Activated CD8-positive, alpha-beta memory T cell treated with anti-CD3 and anti-CD28 coated beads, Interleukin-2, amount 10 ng/mL, durations not matched to agents 7 days and 5 days (primary cell): ENCODE measurements at regions of chr1 and their contacts with region 1.

Region 1: DNA sequence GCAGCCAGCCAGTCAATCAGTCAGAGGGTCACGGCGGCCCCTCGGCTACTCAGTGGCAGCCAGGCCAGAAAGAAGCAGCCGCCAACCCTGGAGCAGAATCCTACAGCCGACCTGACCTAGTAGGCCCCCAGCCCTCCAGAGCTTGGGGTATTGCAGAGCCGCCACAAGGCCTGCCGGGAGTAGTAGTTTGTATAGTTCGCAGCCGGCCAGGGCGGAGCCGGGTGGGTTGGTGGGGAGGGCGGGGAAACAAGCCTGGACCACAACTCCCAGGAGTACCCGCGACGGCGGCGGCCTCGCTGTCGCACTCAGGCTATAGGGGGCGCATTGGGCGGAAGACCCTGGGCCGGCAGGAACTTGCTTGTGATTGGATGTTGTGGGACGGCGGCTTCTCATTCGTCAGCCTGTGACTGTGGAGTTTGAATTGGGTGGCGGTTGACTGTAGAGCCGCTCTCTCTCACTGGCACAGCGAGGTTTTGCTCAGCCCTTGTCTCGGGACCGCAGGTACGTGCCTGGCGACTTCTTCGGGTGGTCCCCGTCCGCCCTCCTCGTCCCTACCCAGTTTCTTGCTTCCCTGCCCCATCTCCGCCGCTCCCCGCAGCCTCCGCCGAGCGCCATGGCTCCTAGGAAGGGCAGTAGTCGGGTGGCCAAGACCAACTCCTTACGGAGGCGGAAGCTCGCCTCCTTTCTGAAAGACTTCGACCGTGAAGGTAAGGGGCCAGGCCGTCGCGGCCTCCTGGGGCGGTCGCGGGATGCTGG is at the start of gene CDCA8:
- DNase-seq: peak; percentile 99
- ATAC-seq: peak; percentile 88
- H3K4me3 Mint-ChIP-seq: peak within 1 kb of the TSS; percentile 94
- H3K27ac Mint-ChIP-seq: peak within 1 kb of the TSS; percentile 94
- H3K4me1 Mint-ChIP-seq: peaks cover 59% of the 10 kb centered on the region
- H3K27me3 Mint-ChIP-seq: no peaks in the 10 kb centered on the region
- total RNA-seq, gene CDCA8: 77.2 to 97.3 TPM

Region 2: GRCh38 chr1:37595440-37596319 is 96.6 kb before region 1 on chr1 and contains the start of gene GNL2:
- CTCF ChIA-PET with region 1: interaction called, 11 read pairs
- DNase-seq: peak; percentile 97
- ATAC-seq: peak; percentile 98
- H3K4me3 Mint-ChIP-seq: peak within 1 kb of the TSS; percentile 100
- H3K27ac Mint-ChIP-seq: peak within 1 kb of the TSS; percentile 97
- H3K4me1 Mint-ChIP-seq: peaks cover 39% of the 10 kb centered on the region
- H3K27me3 Mint-ChIP-seq: peaks cover 5% of the 10 kb centered on the region
- total RNA-seq, gene GNL2: 55.4 to 73.6 TPM

Region 3: DNA sequence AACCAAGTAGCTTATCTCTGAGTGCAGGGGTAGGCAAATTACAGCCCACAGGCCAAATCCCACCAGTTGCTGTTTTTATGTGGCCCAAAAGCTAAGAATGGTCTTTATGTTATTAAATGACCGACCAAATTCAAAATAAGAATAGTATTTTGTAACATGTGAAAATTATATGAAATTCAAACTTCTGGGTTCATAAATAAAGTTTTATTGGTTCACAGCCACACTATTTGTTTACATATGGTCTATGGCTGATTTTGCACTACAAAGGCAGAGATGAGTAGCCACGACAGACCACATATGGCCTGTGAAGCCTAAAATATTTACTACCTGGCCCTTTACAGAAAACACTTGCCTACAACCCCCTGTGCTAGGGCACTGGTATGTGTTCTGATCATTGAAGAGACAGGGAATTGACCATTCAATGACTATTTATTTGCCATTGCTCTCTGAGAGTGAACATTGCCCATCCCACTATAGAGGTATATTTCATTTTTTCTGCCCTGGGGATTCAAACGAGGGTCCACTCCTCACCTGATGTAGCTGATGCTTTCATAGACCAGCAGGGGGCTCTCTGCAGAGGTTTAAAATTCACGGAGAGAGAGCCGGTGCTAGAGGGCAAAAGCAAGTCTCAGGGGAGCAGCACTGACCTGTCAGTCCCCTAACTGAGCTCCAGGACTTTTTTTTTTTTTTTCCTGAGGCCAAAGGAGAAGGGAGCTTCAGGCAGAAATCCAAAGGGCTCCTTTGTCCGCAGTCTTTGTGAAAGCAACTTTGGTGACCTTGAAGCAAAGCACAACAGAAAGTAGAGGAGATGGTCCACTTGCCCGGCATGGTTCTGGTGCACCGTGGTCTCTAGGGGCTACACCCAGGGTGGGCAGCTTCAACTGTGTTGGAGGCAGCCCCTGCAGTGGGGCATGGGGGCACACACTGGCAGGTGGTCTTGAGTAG is 89.2 kb before region 1 on chr1:
- CTCF ChIA-PET with region 1: interaction called, 22 read pairs
- DNase-seq: peak; percentile 55
- ATAC-seq: peak; percentile 87
- H3K4me3 Mint-ChIP-seq: no peak overlapping the region
- H3K27ac Mint-ChIP-seq: no peak overlapping the region
- H3K4me1 Mint-ChIP-seq: peaks cover 2% of the 10 kb centered on the region
- H3K27me3 Mint-ChIP-seq: peaks cover 22% of the 10 kb centered on the region

Region 4: GRCh38 chr1:37726751-37727585 is 34.7 kb after region 1 on chr1:
- CTCF ChIA-PET with region 1: no interaction called
- DNase-seq: no peak
- ATAC-seq: no peak
- H3K4me3 Mint-ChIP-seq: no peak overlapping the region
- H3K27ac Mint-ChIP-seq: no peak overlapping the region
- H3K4me1 Mint-ChIP-seq: no peaks in the 10 kb centered on the region
- H3K27me3 Mint-ChIP-seq: peaks cover 36% of the 10 kb centered on the region